SK-N-SH (cell line): ENCODE measurements at regions of chr15 and their contacts with region 1.

Region 1: GRCh38 chr15:76994971-76995945 is at the start of gene PSTPIP1:
- DNase-seq: peak; percentile 87
- H3K4me3 ChIP-seq: no peak within 1 kb of the TSS
- H3K27ac ChIP-seq: peak within 1 kb of the TSS in 1 of 2 experiments; percentile 83; a peak in 2 of 4 replicates
- H3K4me1 ChIP-seq: peaks cover 16 to 42% of the 10 kb centered on the region in 2 experiments; a peak in 3 of 4 replicates
- H3K27me3 ChIP-seq: no peaks in the 10 kb centered on the region
- CTCF ChIP-seq: no peak
- EP300 ChIP-seq: no peak
- RAD21 ChIP-seq: no peak
- polyA plus RNA-seq, gene PSTPIP1: 0.69 and 1.1 TPM in 2 replicates

Region 2: GRCh38 chr15:76931397-76932007 is 63.8 kb before region 1 on chr15 and contains the start of gene RCN2:
- CTCF ChIA-PET with region 1: no interaction called
- POLR2A ChIA-PET with region 1: interaction called, 14 read pairs
- DNase-seq: peak; percentile 97
- H3K4me3 ChIP-seq: peak within 1 kb of the TSS; percentile 85 to 91
- H3K27ac ChIP-seq: peak within 1 kb of the TSS; percentile 42 to 87; a peak in 3 of 4 replicates
- H3K4me1 ChIP-seq: peaks cover 0 to 7% of the 10 kb centered on the region in 2 experiments; a peak in 1 of 4 replicates
- H3K27me3 ChIP-seq: no peaks in the 10 kb centered on the region
- CTCF ChIP-seq: no peak
- EP300 ChIP-seq: no peak
- RAD21 ChIP-seq: no peak
- polyA plus RNA-seq, gene RCN2: 78.6 and 94.1 TPM in 2 replicates

Region 3: DNA sequence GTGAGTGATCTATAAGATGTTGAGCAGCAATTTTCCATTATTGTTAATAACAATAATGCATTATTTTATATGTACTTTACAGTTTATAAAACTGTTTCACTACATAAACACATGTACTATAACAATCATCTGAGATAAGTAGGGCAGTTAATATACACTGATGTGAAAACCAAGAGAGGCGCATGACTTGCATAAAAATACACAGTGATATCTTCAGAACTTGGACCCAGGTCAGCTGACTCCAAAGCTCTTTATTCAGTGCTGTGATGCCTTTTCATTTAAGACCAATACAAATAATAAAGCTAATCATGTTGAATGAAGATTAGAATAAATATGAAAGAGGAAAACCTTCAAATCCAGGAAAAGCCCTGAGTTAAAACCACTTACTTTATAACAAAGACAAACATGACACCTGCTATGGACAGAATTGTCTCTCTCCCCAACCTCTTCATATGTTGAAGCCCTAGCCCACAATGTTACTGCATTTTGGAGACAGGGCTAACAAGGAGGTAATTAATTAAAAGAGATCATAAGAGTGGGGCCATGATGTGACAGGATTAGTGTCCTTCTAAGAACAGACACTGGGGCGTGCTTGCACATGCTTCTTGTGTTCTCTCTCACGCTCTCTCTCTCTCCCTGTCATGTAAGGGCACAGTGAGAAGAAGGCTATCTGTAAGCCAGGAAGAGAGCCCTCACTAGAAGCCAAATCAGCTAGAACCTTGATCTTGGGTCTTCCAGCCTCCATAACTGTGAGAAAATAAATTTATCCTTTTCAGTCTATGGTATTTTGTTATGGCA is 131.5 kb after region 1 on chr15:
- CTCF ChIA-PET with region 1: no interaction called
- POLR2A ChIA-PET with region 1: no interaction called
- DNase-seq: no peak
- H3K4me3 ChIP-seq: no peak overlapping the region
- H3K27ac ChIP-seq: no peak overlapping the region
- H3K4me1 ChIP-seq: no peaks in the 10 kb centered on the region
- H3K27me3 ChIP-seq: no peaks in the 10 kb centered on the region
- CTCF ChIP-seq: no peak
- EP300 ChIP-seq: no peak
- RAD21 ChIP-seq: no peak